Vagina (tissue), 2 donors: ENCODE measurements at regions of chrX and their contacts with region 1.

Region 1: GRCh38 chrX:68462653-68463052 is 29.4 kb upstream of the OPHN1 start:
- DNase-seq: no peak
- H3K4me3 ChIP-seq: no peak overlapping the region
- H3K27ac ChIP-seq: no peak overlapping the region
- H3K4me1 ChIP-seq: no peaks in the 10 kb centered on the region
- H3K27me3 ChIP-seq: no peaks in the 10 kb centered on the region
- CTCF ChIP-seq: peak in 2 of 3 experiments; percentile 48 to 64
- POLR2A ChIP-seq: no peak

Region 2: DNA sequence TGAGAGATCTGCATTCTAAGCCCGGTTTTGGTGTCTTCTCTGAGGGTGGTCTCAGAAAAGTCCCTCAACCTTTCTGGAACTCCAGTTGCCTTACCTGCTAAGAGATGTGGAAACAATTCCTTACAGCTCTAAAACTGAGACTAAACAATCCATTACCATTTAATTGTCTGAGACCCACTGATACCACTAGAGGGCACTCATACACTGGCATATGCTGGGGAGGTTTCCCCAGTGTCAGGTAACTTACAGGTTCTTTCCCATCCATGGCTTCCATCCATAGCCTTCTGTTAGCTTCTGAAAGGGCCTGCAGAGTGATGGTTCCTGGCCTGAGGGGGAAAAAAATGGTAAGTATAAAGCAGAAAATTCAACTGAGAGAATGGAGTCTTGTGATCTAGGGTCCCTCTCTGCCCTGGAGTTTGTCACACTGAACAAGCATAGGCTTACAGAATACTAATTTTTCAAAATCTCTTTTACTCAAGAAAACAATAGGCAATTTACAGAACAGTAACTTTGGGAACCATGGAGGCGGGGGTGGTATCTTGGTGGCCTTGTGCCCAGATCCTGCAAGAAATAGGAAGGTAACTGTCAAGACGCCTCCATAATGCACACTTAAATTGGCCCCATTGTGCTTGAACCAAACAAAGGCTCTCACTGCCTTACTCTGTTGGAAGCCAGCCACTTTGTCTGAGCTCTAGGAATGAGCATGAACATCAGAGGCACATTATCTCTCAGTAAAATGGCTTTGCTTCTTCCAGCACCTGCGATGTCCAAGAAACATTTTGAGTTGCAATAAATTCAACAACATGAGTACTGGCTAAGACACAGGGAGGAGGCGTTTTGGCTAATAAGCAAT is 265.5 kb before region 1 on chrX:
- intact Hi-C with region 1: loop called (anchors 5 kb)
- DNase-seq: no peak
- H3K4me3 ChIP-seq: no peak overlapping the region
- H3K27ac ChIP-seq: no peak overlapping the region
- H3K4me1 ChIP-seq: no peaks in the 10 kb centered on the region
- H3K27me3 ChIP-seq: no peaks in the 10 kb centered on the region
- CTCF ChIP-seq: peak in 2 of 3 experiments; percentile 56 to 58
- POLR2A ChIP-seq: no peak

Region 3: DNA sequence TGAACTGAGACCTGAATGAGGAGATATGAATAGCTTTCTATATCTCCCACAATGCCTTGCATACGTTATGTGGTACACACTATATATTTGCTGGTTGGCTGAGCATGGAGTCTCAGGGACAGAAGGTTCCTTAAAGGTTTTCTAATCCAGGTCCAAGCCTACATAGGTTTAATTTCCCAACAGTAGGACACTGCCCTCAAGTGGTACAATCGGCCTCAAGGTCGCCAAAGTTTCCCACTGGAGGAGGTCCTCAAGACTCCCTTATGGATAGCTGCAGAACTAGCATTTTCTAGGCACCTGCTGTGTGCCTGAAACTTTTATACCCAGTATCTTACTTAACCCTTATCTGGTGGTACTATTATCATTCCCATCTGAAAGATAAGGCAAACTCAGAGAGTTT is 345.2 kb after region 1 on chrX:
- intact Hi-C with region 1: no loop called
- DNase-seq: peak in 1 of 2 donors; percentile 49
- H3K4me3 ChIP-seq: no peak overlapping the region
- H3K27ac ChIP-seq: no peak overlapping the region
- H3K4me1 ChIP-seq: no peaks in the 10 kb centered on the region
- H3K27me3 ChIP-seq: no peaks in the 10 kb centered on the region
- CTCF ChIP-seq: peak in 1 of 3 experiments; percentile 9
- POLR2A ChIP-seq: no peak